Activated CD4-positive, alpha-beta T cell treated with anti-CD3 and anti-CD28 coated beads, Interleukin-2, amount 10 ng/mL, durations not matched to agents 24 days and 14 days (primary cell): ENCODE measurements at regions of chr2 and their contacts with region 1.

Region 1: GRCh38 chr2:174615871-174616436 is 18.4 kb upstream of the WIPF1 start:
- DNase-seq: peak; percentile 73
- H3K4me3 Mint-ChIP-seq: peak overlapping the region; percentile 49
- H3K27ac Mint-ChIP-seq: peak overlapping the region; percentile 90
- H3K4me1 Mint-ChIP-seq: peaks cover 72% of the 10 kb centered on the region
- H3K27me3 Mint-ChIP-seq: no peaks in the 10 kb centered on the region

Region 2: DNA sequence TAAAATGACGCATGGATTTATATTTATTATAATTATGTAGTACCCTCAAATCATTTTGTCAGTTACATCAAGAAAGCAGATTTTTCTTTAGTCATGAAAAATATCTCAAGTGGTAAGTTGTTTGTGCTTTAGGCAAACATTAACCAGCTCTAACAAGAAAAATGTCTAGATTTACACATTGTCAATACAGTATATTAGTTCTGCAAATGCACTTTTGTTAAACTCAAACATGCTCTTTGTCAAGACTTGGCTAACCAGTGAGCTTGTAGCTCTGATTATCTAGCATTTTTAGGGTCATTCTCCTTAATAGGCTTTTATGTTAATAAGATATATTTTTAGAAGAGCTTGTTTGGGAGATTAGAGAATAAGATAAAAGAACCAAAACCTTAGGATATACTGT is 187.7 kb before region 1 on chr2:
- intact Hi-C with region 1: no loop called
- DNase-seq: no peak
- H3K4me3 Mint-ChIP-seq: no peak overlapping the region
- H3K27ac Mint-ChIP-seq: no peak overlapping the region
- H3K4me1 Mint-ChIP-seq: no peaks in the 10 kb centered on the region
- H3K27me3 Mint-ChIP-seq: no peaks in the 10 kb centered on the region

Region 3: DNA sequence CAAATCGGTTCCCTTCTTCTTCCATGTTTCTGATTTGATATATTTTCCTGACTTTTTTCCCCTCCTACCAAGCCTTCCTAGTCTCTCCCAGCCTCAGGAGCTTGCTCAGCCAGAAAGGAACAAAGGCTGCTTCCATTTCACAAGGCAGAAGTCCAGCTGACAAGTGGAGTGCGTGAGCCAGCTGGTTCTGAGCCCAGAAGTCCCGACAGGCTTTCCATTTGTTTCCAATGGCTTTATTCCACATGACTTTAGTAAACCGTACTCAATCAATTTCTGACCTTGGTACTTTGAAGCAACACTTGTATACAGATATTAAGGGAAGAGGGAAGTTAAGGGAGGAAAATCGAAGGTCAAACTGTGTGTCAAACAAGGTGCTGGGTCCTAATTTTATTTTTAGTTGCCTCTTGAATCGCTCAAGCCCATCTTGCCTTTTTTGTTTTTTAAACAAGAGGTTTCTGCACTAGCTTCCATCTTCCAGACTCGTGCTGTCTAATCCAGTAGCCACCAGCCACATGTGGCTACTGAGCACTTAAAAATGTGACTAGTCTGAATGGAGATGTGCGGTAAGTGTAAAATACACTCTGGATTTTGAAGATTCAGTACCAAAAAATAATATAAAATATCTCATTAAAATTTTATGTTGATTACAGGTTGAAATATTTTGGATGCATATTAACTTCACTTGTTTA is 54.5 kb before region 1 on chr2:
- intact Hi-C with region 1: no loop called
- DNase-seq: no peak
- H3K4me3 Mint-ChIP-seq: no peak overlapping the region
- H3K27ac Mint-ChIP-seq: peak overlapping the region; percentile 25
- H3K4me1 Mint-ChIP-seq: peaks cover 7% of the 10 kb centered on the region
- H3K27me3 Mint-ChIP-seq: no peaks in the 10 kb centered on the region

Region 4: DNA sequence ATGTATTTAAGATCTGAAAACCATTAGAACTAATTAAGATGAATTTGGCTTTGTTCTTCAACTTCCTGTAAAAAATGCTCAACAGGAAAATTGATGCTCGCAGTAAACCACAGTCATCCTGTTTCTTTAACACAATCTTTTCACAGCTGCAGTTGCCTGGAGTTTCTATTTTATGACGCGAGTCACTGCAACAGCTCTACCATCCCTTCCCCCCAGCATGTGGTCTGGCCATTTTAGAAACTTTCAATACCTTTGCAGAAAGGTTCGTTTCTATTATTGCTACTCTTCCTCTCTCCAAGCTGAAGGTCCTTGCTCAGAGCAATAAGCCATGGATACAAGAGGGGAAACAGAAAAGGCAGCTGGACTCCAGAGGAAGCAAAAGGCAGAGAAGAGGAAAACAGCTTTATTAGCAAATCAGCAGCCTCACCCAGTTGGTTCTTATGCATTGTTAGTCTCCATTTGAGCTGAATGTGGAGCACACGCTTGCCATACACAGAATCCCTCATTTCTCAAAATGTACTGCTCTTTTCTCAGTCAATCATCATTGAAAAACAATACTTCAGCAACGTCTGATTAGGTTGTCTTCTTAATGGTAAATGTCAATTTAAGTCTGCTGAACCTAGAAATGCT is 22.3 kb before region 1 on chr2:
- intact Hi-C with region 1: loop called (anchors 2 kb)
- DNase-seq: peak; percentile 92
- H3K4me3 Mint-ChIP-seq: peak overlapping the region; percentile 86
- H3K27ac Mint-ChIP-seq: peak overlapping the region; percentile 98
- H3K4me1 Mint-ChIP-seq: peaks cover 53% of the 10 kb centered on the region
- H3K27me3 Mint-ChIP-seq: no peaks in the 10 kb centered on the region